Panc1 (cell line): ENCODE measurements at regions of chr14 and their contacts with region 1.

Region 1: GRCh38 chr14:89952576-89952975 is 2.0 kb downstream of the EFCAB11 start:
- DNase-seq: no peak
- ATAC-seq: no peak
- H3K4me3 ChIP-seq: no peak overlapping the region
- H3K27ac ChIP-seq: no peak overlapping the region
- H3K4me1 ChIP-seq: peaks cover 10% of the 10 kb centered on the region
- H3K27me3 ChIP-seq: no peaks in the 10 kb centered on the region
- CTCF ChIP-seq: no peak

Region 2: DNA sequence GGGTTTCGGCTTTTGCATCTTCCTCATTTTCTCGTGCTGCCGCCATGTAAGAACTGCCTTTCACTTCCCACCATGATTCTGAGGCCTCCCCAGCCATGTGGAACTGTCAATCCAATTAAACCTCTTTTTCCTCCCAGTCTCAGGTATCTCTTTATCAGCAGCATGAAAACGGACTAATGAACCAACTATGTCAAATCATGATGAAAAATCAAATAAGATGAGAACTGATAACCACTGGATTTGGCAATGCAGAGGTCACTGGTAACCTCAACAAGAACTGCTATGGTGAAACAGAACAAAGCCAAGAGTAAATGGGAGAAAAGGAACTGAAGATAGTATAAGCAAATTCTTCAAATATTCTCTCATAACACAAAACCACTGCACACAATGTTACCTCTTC is 1165.9 kb before region 1 on chr14:
- CTCF ChIA-PET with region 1: no interaction called
- POLR2A ChIA-PET with region 1: no interaction called
- in situ Hi-C with region 1: no loop called
- intact Hi-C with region 1: no loop called
- DNase-seq: no peak
- ATAC-seq: no peak
- H3K4me3 ChIP-seq: no peak overlapping the region
- H3K27ac ChIP-seq: no peak overlapping the region
- H3K4me1 ChIP-seq: no peaks in the 10 kb centered on the region
- H3K27me3 ChIP-seq: peaks cover 13% of the 10 kb centered on the region
- CTCF ChIP-seq: no peak

Region 3: GRCh38 chr14:89915114-89915878 is 37.3 kb before region 1 on chr14:
- CTCF ChIA-PET with region 1: interaction called, 17 read pairs
- POLR2A ChIA-PET with region 1: interaction called, 5 read pairs
- in situ Hi-C with region 1: no loop called
- intact Hi-C with region 1: no loop called
- DNase-seq: peak; percentile 42
- ATAC-seq: no peak
- H3K4me3 ChIP-seq: no peak overlapping the region
- H3K27ac ChIP-seq: no peak overlapping the region
- H3K4me1 ChIP-seq: no peaks in the 10 kb centered on the region
- H3K27me3 ChIP-seq: no peaks in the 10 kb centered on the region
- CTCF ChIP-seq: peak; percentile 80; the same call in 1 of the 2 replicates

Region 4: GRCh38 chr14:89941830-89942377 is 10.7 kb before region 1 on chr14:
- CTCF ChIA-PET with region 1: no interaction called
- POLR2A ChIA-PET with region 1: no interaction called
- in situ Hi-C with region 1: no loop called
- intact Hi-C with region 1: no loop called
- DNase-seq: no peak
- ATAC-seq: no peak
- H3K4me3 ChIP-seq: no peak overlapping the region
- H3K27ac ChIP-seq: no peak overlapping the region
- H3K4me1 ChIP-seq: no peaks in the 10 kb centered on the region
- H3K27me3 ChIP-seq: no peaks in the 10 kb centered on the region
- CTCF ChIP-seq: no peak

Region 5: DNA sequence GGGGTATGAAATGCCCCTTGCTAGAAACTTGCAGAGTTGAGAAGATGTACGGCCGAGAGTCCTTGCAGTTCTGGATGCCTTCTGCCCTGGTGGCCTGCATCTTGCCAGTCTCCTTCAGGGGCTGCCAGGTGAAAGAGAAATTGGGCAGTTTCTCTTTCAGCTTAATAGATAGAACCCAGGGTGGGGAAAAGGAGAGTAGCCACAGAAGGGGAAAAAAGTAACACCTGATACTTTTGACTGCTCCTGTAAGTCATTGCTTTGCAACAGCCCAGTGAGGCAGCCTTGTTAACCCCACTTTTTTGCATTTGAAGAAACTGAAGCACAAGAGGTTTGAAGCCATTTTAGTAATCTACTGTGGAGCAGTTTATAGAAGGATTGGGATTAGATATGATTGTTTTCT is 30.8 kb after region 1 on chr14:
- CTCF ChIA-PET with region 1: no interaction called
- POLR2A ChIA-PET with region 1: no interaction called
- in situ Hi-C with region 1: no loop called
- intact Hi-C with region 1: no loop called
- DNase-seq: no peak
- ATAC-seq: no peak
- H3K4me3 ChIP-seq: no peak overlapping the region
- H3K27ac ChIP-seq: no peak overlapping the region
- H3K4me1 ChIP-seq: no peaks in the 10 kb centered on the region
- H3K27me3 ChIP-seq: no peaks in the 10 kb centered on the region
- CTCF ChIP-seq: no peak

Region 6: DNA sequence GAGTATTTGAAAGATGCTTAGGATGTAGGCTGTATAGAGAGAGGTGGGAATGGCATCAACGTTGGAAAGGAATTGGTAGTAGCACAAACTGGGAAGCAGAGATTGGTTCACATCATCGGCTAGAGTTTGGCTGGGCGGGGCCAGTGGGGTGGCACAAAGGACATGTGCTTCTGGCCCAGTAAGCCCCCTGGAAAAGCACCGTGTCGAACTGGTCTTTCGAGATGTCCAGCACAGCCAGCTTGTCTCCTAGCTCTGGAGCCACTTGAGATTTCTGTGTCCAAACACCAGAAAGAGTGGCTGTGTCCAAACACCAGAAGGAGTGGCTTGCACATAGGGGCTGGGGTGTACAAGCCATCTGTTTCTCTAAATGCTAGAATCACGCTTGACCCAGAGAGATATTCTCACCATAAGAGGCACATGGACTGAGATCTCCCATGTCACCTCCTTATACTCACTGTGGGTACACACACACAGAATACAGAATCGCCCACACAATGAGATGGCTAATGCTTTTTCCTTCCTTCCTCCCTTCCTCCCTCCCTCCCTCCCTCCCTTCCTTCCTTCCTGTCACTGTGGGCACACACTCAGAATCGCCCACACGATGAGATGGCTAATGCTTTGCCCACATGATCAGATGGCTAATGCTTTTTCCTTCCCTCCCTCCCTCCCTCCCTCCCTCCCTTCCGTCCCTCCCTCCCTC is 67.4 kb after region 1 on chr14:
- CTCF ChIA-PET with region 1: no interaction called
- POLR2A ChIA-PET with region 1: no interaction called
- in situ Hi-C with region 1: no loop called
- intact Hi-C with region 1: no loop called
- DNase-seq: no peak
- ATAC-seq: no peak
- H3K4me3 ChIP-seq: no peak overlapping the region
- H3K27ac ChIP-seq: no peak overlapping the region
- H3K4me1 ChIP-seq: no peaks in the 10 kb centered on the region
- H3K27me3 ChIP-seq: no peaks in the 10 kb centered on the region
- CTCF ChIP-seq: no peak